GM10248 (cell line): ENCODE measurements at regions of chr5 and their contacts with region 1.

Region 1: GRCh38 chr5:78779771-78780616 is 131.4 kb upstream of the LHFPL2 start:
- DNase-seq: no peak
- CTCF ChIP-seq: no peak

Region 2: DNA sequence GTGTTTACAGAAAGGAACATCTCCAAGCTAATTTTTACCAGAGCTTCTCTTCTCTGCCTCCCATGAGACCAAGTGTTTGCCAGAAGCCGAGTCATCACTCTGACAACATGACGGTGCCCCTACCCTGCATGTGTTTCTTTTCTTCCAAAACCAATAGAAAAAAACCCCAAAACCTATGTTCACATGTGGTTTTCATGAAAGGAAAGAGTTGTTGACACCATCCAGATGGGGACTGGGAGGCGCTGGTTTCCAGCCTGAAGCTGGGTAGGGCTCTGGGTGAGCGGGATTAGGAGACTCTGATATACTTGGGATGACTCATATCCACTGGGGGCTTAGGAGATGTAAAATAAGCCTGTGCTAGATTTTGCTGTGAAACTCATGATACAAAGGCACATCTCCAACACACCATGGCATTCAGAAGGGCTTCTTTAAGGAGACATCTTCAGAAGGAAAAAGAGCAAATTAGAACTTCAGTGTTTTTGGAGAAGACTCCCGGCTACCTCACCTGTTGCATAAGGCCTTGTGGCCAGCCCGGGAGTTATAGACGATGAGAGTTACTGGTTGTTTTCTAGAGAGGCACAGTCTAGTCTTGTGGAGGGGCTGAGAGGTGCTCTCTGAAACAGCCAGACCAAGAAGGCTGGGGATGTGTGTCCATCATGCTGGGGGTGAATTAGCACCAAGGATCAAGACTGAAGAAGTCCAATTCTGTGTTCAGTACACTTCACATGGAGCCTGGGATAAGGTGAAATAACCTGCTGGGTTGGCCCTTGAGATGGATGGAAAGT is 22.5 kb before region 1 on chr5:
- CTCF ChIA-PET with region 1: interaction called, 15 read pairs
- POLR2A ChIA-PET with region 1: no interaction called
- DNase-seq: no peak
- CTCF ChIP-seq: no peak

Region 3: DNA sequence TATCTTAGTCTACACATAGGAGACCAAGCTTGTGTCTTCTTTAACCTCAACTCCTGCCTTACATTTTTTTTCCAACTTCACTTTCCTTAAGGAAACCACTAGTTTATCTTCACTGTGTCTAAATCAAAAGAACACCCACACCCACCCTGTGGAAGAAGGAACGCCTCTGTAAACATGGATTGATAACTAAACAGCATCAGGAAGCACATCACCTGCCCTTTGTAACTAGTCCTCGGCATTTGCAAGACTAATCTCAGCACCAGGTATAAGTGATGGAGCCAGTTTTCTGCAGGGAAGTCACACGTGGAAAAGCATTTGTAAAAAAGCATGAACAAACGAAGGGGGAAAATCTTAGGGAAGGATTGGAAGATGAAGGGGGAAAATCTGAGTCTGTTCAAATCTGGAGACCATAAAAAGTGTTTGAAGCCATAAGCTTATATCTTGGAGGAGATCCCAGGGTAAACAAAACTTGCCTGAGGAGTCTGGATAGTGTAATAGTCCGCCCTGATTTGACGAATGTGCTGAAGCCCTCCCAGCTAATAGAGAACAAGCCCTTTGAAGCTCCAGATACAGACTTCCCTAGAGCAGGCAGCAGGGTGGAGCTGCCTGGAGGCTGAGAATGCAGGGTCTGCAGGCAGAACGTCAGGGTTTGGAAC is 14.1 kb before region 1 on chr5:
- CTCF ChIA-PET with region 1: interaction called, 15 read pairs
- POLR2A ChIA-PET with region 1: no interaction called
- DNase-seq: no peak
- CTCF ChIP-seq: no peak